ENCODE measurements at regions of chr15 and their contacts with region 1.

Region 1: GRCh38 chr15:59492389-59493377 is 54.7 kb downstream of the FAM81A start:
- DNase-seq: peak; percentile 12 to 63 (median 49)
- ATAC-seq: peak; percentile 85
- H3K4me3 ChIP-seq: no peak overlapping the region
- H3K4me3 Mint-ChIP-seq: peak overlapping the region in 1 of 10 donors; percentile 26
- H3K27ac ChIP-seq: no peak overlapping the region
- H3K27ac Mint-ChIP-seq: peak overlapping the region in 1 of 9 donors; percentile 2
- H3K4me1 ChIP-seq: no peaks in the 10 kb centered on the region
- H3K4me1 Mint-ChIP-seq: peaks cover 0 to 5% (median 4%) of the 10 kb centered on the region in 7 donors
- H3K27me3 ChIP-seq: no peaks in the 10 kb centered on the region
- H3K27me3 Mint-ChIP-seq: peaks cover 0 to 28% (median 3%) of the 10 kb centered on the region in 5 donors

Region 2: DNA sequence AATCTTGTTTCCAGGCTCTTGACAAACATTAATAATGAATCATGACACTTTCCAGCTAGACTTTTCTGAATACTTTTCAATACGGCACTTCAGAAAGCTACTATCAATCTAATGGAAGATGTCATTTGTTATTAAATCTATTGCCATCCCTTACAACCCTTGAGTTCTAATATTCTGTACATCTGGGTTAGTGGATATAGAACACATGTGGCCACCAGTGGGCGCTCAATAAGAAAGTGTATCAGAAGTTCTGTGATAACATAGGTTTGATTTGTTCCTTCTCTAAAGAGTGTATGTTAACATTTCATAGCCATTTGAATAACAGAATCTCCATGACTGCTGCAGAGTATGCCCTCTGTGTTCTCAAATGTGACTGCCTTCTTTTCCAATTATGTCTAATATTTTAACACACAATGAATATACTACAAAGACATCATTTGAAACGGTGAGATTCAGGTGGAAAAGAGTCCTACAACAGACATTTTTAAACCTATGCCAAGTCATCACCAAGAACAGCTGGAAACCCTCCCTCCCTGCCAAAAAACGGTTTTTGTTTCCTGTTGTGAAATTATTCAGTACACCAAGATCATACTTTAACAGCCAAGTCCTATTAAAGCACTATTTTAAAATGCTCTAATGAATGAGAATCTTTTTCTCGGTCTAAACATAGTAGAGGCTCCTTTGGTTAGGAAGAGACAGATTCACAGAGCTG is 1449.3 kb before region 1 on chr15:
- CTCF ChIA-PET with region 1: no interaction called
- POLR2A ChIA-PET with region 1: no interaction called
- intact Hi-C with region 1: loop called in 1 of 2 experiments (anchors 10 kb)
- DNase-seq: peak in 4 of 9 donors; percentile 10 to 36 (median 20)
- ATAC-seq: peak; percentile 63
- H3K4me3 ChIP-seq: no peak overlapping the region
- H3K4me3 Mint-ChIP-seq: no peak overlapping the region
- H3K27ac ChIP-seq: no peak overlapping the region
- H3K27ac Mint-ChIP-seq: no peak overlapping the region
- H3K4me1 ChIP-seq: no peaks in the 10 kb centered on the region
- H3K4me1 Mint-ChIP-seq: peaks cover 0 to 1% (median 0%) of the 10 kb centered on the region in 7 donors
- H3K27me3 ChIP-seq: no peaks in the 10 kb centered on the region
- H3K27me3 Mint-ChIP-seq: peaks cover 27 to 63% (median 45%) of the 10 kb centered on the region in 5 donors

Region 3: GRCh38 chr15:58839485-58839884 is 653.2 kb before region 1 on chr15:
- CTCF ChIA-PET with region 1: no interaction called
- POLR2A ChIA-PET with region 1: no interaction called
- intact Hi-C with region 1: loop called in 1 of 2 experiments (anchors 1 kb)
- DNase-seq: peak in 2 of 9 donors; percentile 2 to 15
- ATAC-seq: no peak
- H3K4me3 ChIP-seq: no peak overlapping the region
- H3K4me3 Mint-ChIP-seq: no peak overlapping the region
- H3K27ac ChIP-seq: no peak overlapping the region
- H3K27ac Mint-ChIP-seq: no peak overlapping the region
- H3K4me1 ChIP-seq: no peaks in the 10 kb centered on the region
- H3K4me1 Mint-ChIP-seq: peaks cover 0 to 2% (median 0%) of the 10 kb centered on the region in 7 donors
- H3K27me3 ChIP-seq: no peaks in the 10 kb centered on the region
- H3K27me3 Mint-ChIP-seq: no peaks in the 10 kb centered on the region

Region 4: DNA sequence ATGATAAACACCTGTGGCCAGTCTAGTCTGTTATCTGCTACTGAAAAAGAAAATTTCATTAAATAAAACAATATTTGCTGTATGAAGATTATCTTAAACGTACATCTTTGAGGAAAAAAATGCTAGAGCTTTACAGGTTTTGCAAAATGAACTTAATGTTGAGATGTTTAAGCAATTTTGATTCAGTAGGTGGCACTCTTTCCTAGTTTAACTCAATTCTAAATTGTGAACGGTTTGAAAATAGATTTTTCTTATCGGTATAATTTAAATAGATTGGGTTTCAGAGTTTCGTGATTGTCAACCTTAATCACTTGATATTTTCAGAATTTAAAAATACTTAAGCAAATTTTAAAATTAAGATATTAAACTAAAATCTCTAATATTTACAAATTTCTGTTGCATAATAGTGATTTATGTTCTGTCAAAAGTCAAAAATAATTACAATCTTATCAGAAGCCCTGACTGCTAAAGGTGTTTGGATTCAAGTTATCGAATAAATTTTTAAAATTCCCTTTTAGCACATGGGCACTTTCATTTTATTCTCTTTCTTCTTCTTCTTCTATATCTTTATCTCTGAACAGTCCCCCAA is 512.2 kb before region 1 on chr15:
- CTCF ChIA-PET with region 1: interaction called, 23 read pairs
- POLR2A ChIA-PET with region 1: no interaction called
- intact Hi-C with region 1: loop called (anchors 1 kb)
- DNase-seq: peak in 6 of 9 donors; percentile 30 to 57 (median 48)
- ATAC-seq: peak; percentile 62
- H3K4me3 ChIP-seq: no peak overlapping the region
- H3K4me3 Mint-ChIP-seq: peak overlapping the region in 3 of 10 donors; percentile 55 to 74 (median 60)
- H3K27ac ChIP-seq: no peak overlapping the region
- H3K27ac Mint-ChIP-seq: peak overlapping the region in 1 of 9 donors; percentile 85
- H3K4me1 ChIP-seq: peaks cover 19 to 20% of the 10 kb centered on the region in 2 donors
- H3K4me1 Mint-ChIP-seq: peaks cover 21 to 37% (median 27%) of the 10 kb centered on the region in 7 donors
- H3K27me3 ChIP-seq: no peaks in the 10 kb centered on the region
- H3K27me3 Mint-ChIP-seq: peaks cover 0 to 18% (median 0%) of the 10 kb centered on the region in 5 donors

Region 5: GRCh38 chr15:59160880-59161593 is 331.6 kb before region 1 on chr15:
- CTCF ChIA-PET with region 1: no interaction called
- POLR2A ChIA-PET with region 1: no interaction called
- intact Hi-C with region 1: loop called in 1 of 2 experiments (anchors 1 kb)
- DNase-seq: peak in 3 of 9 donors; percentile 6 to 21 (median 10)
- ATAC-seq: no peak
- H3K4me3 ChIP-seq: no peak overlapping the region
- H3K4me3 Mint-ChIP-seq: no peak overlapping the region
- H3K27ac ChIP-seq: no peak overlapping the region
- H3K27ac Mint-ChIP-seq: no peak overlapping the region
- H3K4me1 ChIP-seq: no peaks in the 10 kb centered on the region
- H3K4me1 Mint-ChIP-seq: peaks cover 0 to 8% (median 0%) of the 10 kb centered on the region in 7 donors
- H3K27me3 ChIP-seq: no peaks in the 10 kb centered on the region
- H3K27me3 Mint-ChIP-seq: no peaks in the 10 kb centered on the region

Region 6: DNA sequence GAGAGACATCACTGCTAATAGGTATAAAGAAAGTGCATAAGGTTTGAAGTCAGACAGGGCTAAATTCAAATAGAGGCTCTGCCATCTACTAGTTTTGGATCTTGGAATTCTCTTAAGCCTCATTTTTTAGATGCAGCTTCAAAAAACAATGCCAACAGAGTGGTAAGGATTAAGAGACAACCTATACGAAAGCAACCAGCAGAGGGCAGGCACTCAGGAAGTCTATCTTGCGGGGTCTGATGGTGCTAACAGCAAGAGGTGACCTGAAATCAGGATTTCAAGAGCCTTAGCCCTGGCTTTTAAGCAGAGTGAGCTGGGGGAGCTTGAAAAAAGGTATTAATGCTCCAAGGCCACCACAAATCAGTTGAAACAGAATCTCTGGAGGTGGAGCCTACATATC is 245.3 kb before region 1 on chr15:
- CTCF ChIA-PET with region 1: interaction called, 4 read pairs
- POLR2A ChIA-PET with region 1: no interaction called
- intact Hi-C with region 1: loop called in 1 of 2 experiments (anchors 1 kb)
- DNase-seq: peak in 8 of 9 donors; percentile 8 to 50 (median 33)
- ATAC-seq: peak; percentile 79
- H3K4me3 ChIP-seq: no peak overlapping the region
- H3K4me3 Mint-ChIP-seq: no peak overlapping the region
- H3K27ac ChIP-seq: no peak overlapping the region
- H3K27ac Mint-ChIP-seq: no peak overlapping the region
- H3K4me1 ChIP-seq: no peaks in the 10 kb centered on the region
- H3K4me1 Mint-ChIP-seq: peaks cover 0 to 25% (median 0%) of the 10 kb centered on the region in 7 donors
- H3K27me3 ChIP-seq: no peaks in the 10 kb centered on the region
- H3K27me3 Mint-ChIP-seq: peaks cover 0 to 1% (median 0%) of the 10 kb centered on the region in 5 donors

Region 7: GRCh38 chr15:59434481-59434880 is 58.2 kb before region 1 on chr15:
- CTCF ChIA-PET with region 1: no interaction called
- POLR2A ChIA-PET with region 1: no interaction called
- intact Hi-C with region 1: no loop called
- DNase-seq: no peak
- ATAC-seq: no peak
- H3K4me3 ChIP-seq: no peak overlapping the region
- H3K4me3 Mint-ChIP-seq: no peak overlapping the region
- H3K27ac ChIP-seq: no peak overlapping the region
- H3K27ac Mint-ChIP-seq: no peak overlapping the region
- H3K4me1 ChIP-seq: peaks cover 7 to 9% of the 10 kb centered on the region in 2 donors
- H3K4me1 Mint-ChIP-seq: peaks cover 9 to 25% (median 15%) of the 10 kb centered on the region in 7 donors
- H3K27me3 ChIP-seq: peaks cover 6 to 11% of the 10 kb centered on the region in 2 donors
- H3K27me3 Mint-ChIP-seq: peaks cover 42 to 74% (median 53%) of the 10 kb centered on the region in 5 donors

Region 8: DNA sequence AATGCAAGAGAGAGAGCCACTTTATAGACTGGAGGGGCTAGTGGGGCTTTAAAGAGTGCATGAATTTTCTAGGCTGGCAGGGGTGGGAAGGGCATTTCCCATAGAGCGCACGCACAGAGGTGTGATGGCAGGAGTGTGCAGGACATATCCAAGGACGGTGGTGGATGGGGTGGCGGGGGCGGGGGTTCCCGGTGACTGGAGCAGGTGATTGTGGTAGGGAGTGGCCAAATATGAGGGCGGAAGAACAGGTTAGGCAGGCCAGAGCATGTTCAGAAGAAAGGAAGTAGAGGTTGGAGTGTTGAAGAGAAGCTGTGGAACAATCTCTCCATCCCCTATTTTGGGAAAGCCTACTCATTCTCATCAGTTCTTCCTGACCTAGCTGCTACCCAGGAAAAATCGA is 36.6 kb before region 1 on chr15:
- CTCF ChIA-PET with region 1: no interaction called
- POLR2A ChIA-PET with region 1: no interaction called
- intact Hi-C with region 1: no loop called
- DNase-seq: no peak
- ATAC-seq: no peak
- H3K4me3 ChIP-seq: no peak overlapping the region
- H3K4me3 Mint-ChIP-seq: no peak overlapping the region
- H3K27ac ChIP-seq: no peak overlapping the region
- H3K27ac Mint-ChIP-seq: no peak overlapping the region
- H3K4me1 ChIP-seq: no peaks in the 10 kb centered on the region
- H3K4me1 Mint-ChIP-seq: peaks cover 0 to 1% (median 0%) of the 10 kb centered on the region in 7 donors
- H3K27me3 ChIP-seq: no peaks in the 10 kb centered on the region
- H3K27me3 Mint-ChIP-seq: peaks cover 0 to 43% (median 4%) of the 10 kb centered on the region in 5 donors

Region 9: DNA sequence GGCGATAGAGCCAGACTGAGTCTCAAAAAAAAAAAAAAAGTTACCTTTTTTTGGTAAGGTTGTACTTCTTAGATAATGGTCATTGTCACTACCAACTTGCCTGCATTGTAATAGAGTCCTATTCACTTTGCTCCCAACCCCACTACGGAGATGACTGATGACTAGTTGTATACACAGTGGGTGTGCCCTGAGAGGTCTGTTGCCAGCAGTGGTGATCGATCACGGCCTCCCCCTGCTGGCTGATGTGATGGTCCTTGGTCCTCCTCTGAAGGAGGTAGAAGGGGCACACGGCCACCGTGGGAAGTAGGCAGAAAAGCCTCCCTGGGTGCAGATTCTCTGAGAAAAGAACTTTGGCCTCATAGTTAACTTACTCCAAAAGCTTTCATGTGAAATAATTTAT is 129.6 kb after region 1 on chr15:
- CTCF ChIA-PET with region 1: no interaction called
- POLR2A ChIA-PET with region 1: no interaction called
- intact Hi-C with region 1: no loop called
- DNase-seq: peak in 1 of 9 donors; percentile 48
- ATAC-seq: no peak
- H3K4me3 ChIP-seq: no peak overlapping the region
- H3K4me3 Mint-ChIP-seq: no peak overlapping the region
- H3K27ac ChIP-seq: no peak overlapping the region
- H3K27ac Mint-ChIP-seq: no peak overlapping the region
- H3K4me1 ChIP-seq: no peaks in the 10 kb centered on the region
- H3K4me1 Mint-ChIP-seq: no peaks in the 10 kb centered on the region
- H3K27me3 ChIP-seq: peaks cover 0 to 3% of the 10 kb centered on the region in 2 donors
- H3K27me3 Mint-ChIP-seq: peaks cover 0 to 25% (median 12%) of the 10 kb centered on the region in 5 donors

Region 10: GRCh38 chr15:60044636-60045270 is 552.1 kb after region 1 on chr15:
- CTCF ChIA-PET with region 1: no interaction called
- POLR2A ChIA-PET with region 1: no interaction called
- intact Hi-C with region 1: no loop called
- DNase-seq: peak in 8 of 9 donors; percentile 33 to 66 (median 45)
- ATAC-seq: peak; percentile 44
- H3K4me3 ChIP-seq: no peak overlapping the region
- H3K4me3 Mint-ChIP-seq: peak overlapping the region in 8 of 10 donors; percentile 21 to 78 (median 50)
- H3K27ac ChIP-seq: no peak overlapping the region
- H3K27ac Mint-ChIP-seq: peak overlapping the region in 5 of 9 donors; percentile 5 to 67 (median 27)
- H3K4me1 ChIP-seq: peaks cover 5% of the 10 kb centered on the region in 2 donors
- H3K4me1 Mint-ChIP-seq: peaks cover 3 to 23% (median 19%) of the 10 kb centered on the region in 7 donors
- H3K27me3 ChIP-seq: no peaks in the 10 kb centered on the region
- H3K27me3 Mint-ChIP-seq: peaks cover 0 to 15% (median 11%) of the 10 kb centered on the region in 5 donors